RWPE1 (cell line): ENCODE measurements at regions of chr7 and their contacts with region 1.

Region 1: GRCh38 chr7:114583281-114583680 is 168.7 kb downstream of the FOXP2 start:
- DNase-seq: no peak
- H3K27ac ChIP-seq: no peak overlapping the region
- CTCF ChIP-seq: no peak

Region 2: DNA sequence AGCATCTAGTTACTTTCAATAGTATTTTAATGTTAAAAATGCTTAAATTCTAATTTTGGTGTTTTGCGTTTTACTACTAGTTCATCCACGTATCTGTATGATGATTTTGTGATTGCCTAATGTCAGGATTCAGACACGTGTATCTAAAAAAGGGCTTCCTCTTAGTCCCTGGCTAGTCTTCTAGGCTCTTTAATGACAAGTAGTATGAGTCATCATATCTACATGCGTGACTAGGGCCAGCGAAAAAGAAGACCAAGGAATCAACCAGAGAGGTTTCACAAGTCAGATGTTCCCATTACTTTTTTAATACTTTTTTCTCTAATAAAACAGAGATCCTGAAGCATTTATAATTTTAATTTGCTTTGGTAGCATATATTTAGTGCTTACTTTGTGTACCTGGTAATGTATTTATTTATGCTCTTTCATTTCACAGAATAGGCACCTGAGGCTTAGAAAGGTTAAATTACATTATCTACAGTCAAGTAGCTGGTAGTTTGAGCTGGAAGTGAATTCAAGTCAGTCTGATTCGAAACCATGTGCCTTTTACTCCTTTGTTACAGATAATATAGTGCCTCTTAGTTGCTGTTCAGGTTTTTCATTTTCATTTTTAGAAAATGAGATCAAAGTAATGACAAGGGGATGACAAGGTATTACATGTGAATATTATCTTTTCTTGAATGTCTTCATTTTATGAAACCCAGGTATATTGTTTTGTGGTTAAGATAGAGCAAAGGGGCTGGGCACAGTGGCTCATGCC is 28.3 kb before region 1 on chr7:
- CTCF ChIA-PET with region 1: interaction called, 13 read pairs
- POLR2A ChIA-PET with region 1: no interaction called
- DNase-seq: peak; percentile 18
- H3K27ac ChIP-seq: no peak overlapping the region
- CTCF ChIP-seq: no peak